CD14-positive monocyte (primary cell): ENCODE measurements at regions of chr2 and their contacts with region 1.

Region 1: DNA sequence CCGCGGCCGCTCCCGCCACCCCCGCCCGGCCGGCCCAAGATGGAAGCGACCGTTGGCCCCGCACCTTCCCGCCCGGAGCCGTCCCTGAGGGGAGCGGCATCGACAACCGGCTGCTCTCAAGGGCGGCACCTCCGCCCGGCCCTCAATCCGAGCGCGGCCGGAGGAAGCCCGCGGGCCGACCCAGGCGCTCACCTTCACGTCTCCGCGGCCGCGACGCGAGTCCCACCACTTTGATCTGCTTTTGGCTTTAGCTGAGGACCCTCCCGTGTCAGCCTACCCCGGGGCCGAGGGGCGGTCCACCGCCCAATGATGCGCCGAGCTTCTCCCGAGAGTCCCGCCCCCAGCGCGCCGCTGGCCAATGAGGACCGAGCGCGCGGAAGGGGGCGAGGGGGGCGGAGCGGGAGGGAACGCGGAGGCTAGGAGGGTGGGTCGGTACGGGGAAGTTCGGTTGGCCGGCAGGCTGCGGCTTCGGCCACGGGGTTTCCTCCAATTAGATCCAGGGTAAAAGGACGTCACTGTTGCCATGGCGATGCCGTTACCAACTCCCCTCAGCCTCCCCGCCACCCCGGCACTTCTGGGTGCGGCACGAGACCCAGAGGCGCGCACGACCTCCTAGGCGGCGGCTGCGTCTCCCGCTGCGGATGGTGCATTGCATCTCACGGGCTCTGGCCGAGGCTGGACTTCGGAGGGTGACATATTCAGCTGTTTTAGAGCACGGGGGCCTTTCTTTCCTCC is at the start of gene YWHAQ:
- DNase-seq: peak; percentile 99
- H3K4me3 ChIP-seq: peak within 1 kb of the TSS; percentile 84 to 91 (median 91)
- H3K4me3 Mint-ChIP-seq: peak within 1 kb of the TSS; percentile 98
- H3K27ac ChIP-seq: peak within 1 kb of the TSS; percentile 80 to 90
- H3K27ac Mint-ChIP-seq: peak within 1 kb of the TSS; percentile 92 to 96 (median 95)
- H3K4me1 ChIP-seq: peaks cover 14 to 24% of the 10 kb centered on the region in 2 donors
- H3K4me1 Mint-ChIP-seq: peaks cover 41% of the 10 kb centered on the region
- H3K27me3 ChIP-seq: no peaks in the 10 kb centered on the region
- H3K27me3 Mint-ChIP-seq: peaks cover 1 to 8% (median 3%) of the 10 kb centered on the region in 3 donors
- CTCF ChIP-seq: no peak
- polyA plus RNA-seq, gene YWHAQ: 60.9 to 173 (median 165) TPM

Region 2: GRCh38 chr2:9538000-9538507 is 92.9 kb before region 1 on chr2:
- intact Hi-C with region 1: loop called in 1 of 2 experiments (anchors 2 kb)
- DNase-seq: peak; percentile 83 to 99 (median 90)
- H3K4me3 ChIP-seq: peak overlapping the region in 1 of 3 experiments; percentile 36
- H3K4me3 Mint-ChIP-seq: no peak overlapping the region
- H3K27ac ChIP-seq: peak overlapping the region; percentile 80 to 93
- H3K27ac Mint-ChIP-seq: peak overlapping the region; percentile 95 to 99 (median 97)
- H3K4me1 ChIP-seq: peaks cover 20 to 37% of the 10 kb centered on the region in 2 donors
- H3K4me1 Mint-ChIP-seq: peaks cover 41% of the 10 kb centered on the region
- H3K27me3 ChIP-seq: no peaks in the 10 kb centered on the region
- H3K27me3 Mint-ChIP-seq: peaks cover 0 to 1% (median 1%) of the 10 kb centered on the region in 3 donors
- CTCF ChIP-seq: no peak

Region 3: DNA sequence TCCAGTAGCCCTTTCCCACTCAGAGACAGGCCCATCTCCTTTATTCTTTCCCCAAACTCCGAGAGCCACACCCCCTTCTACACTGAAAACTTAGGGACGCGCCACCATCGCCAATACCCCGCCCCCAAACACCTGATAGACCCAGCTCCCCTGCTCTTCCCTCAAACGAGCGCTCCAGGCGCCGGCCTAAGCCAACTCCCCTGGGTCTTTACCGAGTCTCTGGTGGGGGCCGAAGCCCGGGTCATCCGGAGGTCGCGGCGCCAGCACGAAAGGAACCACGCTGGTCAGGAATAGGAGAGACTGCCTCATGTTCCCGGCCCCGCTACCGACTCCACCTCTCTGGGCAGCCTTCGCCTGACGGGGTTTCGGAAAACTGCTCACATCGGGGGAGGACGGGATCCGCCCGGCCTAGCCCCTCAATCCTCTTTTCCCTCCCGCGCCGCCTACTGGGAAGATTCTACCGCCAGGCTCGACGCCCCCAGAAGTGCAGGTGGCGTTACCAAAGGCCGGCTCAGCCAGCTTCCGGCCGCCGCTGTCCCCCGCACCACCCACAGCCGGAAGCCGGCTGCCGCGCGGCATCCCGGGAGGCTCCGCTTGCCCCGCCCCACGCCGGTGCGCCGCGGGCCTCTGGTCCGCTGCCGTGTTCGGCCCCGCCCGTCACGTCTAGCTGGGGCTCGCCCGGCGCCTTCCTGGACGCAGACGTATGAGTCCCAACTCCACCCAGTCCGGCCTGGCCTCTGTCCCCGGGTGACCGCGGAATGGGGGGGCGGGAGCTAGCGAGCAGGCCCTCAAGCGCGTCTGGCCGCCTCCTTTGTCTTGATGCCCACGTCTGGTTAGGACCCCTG is 75.4 kb before region 1 on chr2 and contains the start of gene ADAM17:
- intact Hi-C with region 1: loop called (anchors 1 to 2 kb)
- DNase-seq: peak; percentile 96 to 97 (median 97)
- H3K4me3 ChIP-seq: peak within 1 kb of the TSS; percentile 68 to 100 (median 99)
- H3K4me3 Mint-ChIP-seq: peak within 1 kb of the TSS; percentile 96 to 98
- H3K27ac ChIP-seq: peak within 1 kb of the TSS; percentile 98 to 99
- H3K27ac Mint-ChIP-seq: peak within 1 kb of the TSS; percentile 98 to 100 (median 99)
- H3K4me1 ChIP-seq: peaks cover 45 to 54% of the 10 kb centered on the region in 2 donors
- H3K4me1 Mint-ChIP-seq: peaks cover 46% of the 10 kb centered on the region
- H3K27me3 ChIP-seq: no peaks in the 10 kb centered on the region
- H3K27me3 Mint-ChIP-seq: peaks cover 0 to 6% (median 4%) of the 10 kb centered on the region in 3 donors
- CTCF ChIP-seq: no peak
- polyA plus RNA-seq, gene ADAM17: 30.2 to 34.8 (median 30.9) TPM

Region 4: GRCh38 chr2:9703085-9703641 is 72.2 kb after region 1 on chr2:
- intact Hi-C with region 1: loop called in 1 of 2 experiments (anchors 2 kb)
- DNase-seq: peak; percentile 52 to 66 (median 61)
- H3K4me3 ChIP-seq: no peak overlapping the region
- H3K4me3 Mint-ChIP-seq: no peak overlapping the region
- H3K27ac ChIP-seq: peak overlapping the region; percentile 19 to 68
- H3K27ac Mint-ChIP-seq: peak overlapping the region; percentile 43 to 89 (median 68)
- H3K4me1 ChIP-seq: peaks cover 22 to 37% of the 10 kb centered on the region in 2 donors
- H3K4me1 Mint-ChIP-seq: peaks cover 28% of the 10 kb centered on the region
- H3K27me3 ChIP-seq: no peaks in the 10 kb centered on the region
- H3K27me3 Mint-ChIP-seq: peaks cover 1 to 4% (median 3%) of the 10 kb centered on the region in 3 donors
- CTCF ChIP-seq: no peak

Region 5: GRCh38 chr2:9753276-9753600 is 122.3 kb after region 1 on chr2:
- intact Hi-C with region 1: loop called in 1 of 2 experiments (anchors 5 kb)
- DNase-seq: peak; percentile 96 to 97 (median 97)
- H3K4me3 ChIP-seq: peak overlapping the region in 1 of 3 experiments; percentile 21
- H3K4me3 Mint-ChIP-seq: peak overlapping the region; percentile 68 to 75
- H3K27ac ChIP-seq: peak overlapping the region; percentile 87 to 95
- H3K27ac Mint-ChIP-seq: peak overlapping the region; percentile 84 to 99 (median 97)
- H3K4me1 ChIP-seq: peaks cover 46 to 51% of the 10 kb centered on the region in 2 donors
- H3K4me1 Mint-ChIP-seq: peaks cover 51% of the 10 kb centered on the region
- H3K27me3 ChIP-seq: peaks cover 11 to 44% of the 10 kb centered on the region in 2 donors
- H3K27me3 Mint-ChIP-seq: peaks cover 32 to 63% (median 42%) of the 10 kb centered on the region in 3 donors
- CTCF ChIP-seq: no peak